ENCODE measurements at regions of chr14 and their contacts with region 1.

Region 1: GRCh38 chr14:61837336-61838229 is 75.4 kb downstream of the SNAPC1 start:
- DNase-seq: peak; percentile 84
- H3K4me3 Mint-ChIP-seq: no peak overlapping the region
- H3K27ac Mint-ChIP-seq: no peak overlapping the region
- H3K4me1 Mint-ChIP-seq: no peaks in the 10 kb centered on the region
- H3K27me3 Mint-ChIP-seq: no peaks in the 10 kb centered on the region
- CTCF ChIP-seq: peak; percentile 73

Region 2: GRCh38 chr14:61296719-61297502 is 540.7 kb before region 1 on chr14:
- CTCF ChIA-PET with region 1: no interaction called
- intact Hi-C with region 1: loop called (anchors 5 kb)
- DNase-seq: peak; percentile 25
- H3K4me3 Mint-ChIP-seq: no peak overlapping the region
- H3K27ac Mint-ChIP-seq: no peak overlapping the region
- H3K4me1 Mint-ChIP-seq: peaks cover 9% of the 10 kb centered on the region
- H3K27me3 Mint-ChIP-seq: no peaks in the 10 kb centered on the region
- CTCF ChIP-seq: peak; percentile 29

Region 3: GRCh38 chr14:61456720-61457119 is 380.9 kb before region 1 on chr14:
- CTCF ChIA-PET with region 1: interaction called, 7 read pairs
- intact Hi-C with region 1: loop called (anchors 1 kb)
- DNase-seq: peak; percentile 85
- H3K4me3 Mint-ChIP-seq: no peak overlapping the region
- H3K27ac Mint-ChIP-seq: no peak overlapping the region
- H3K4me1 Mint-ChIP-seq: peaks cover 6% of the 10 kb centered on the region
- H3K27me3 Mint-ChIP-seq: no peaks in the 10 kb centered on the region
- CTCF ChIP-seq: peak; percentile 71

Region 4: GRCh38 chr14:61461808-61462275 is 375.7 kb before region 1 on chr14:
- CTCF ChIA-PET with region 1: interaction called, 7 read pairs
- intact Hi-C with region 1: loop called (anchors 1 kb)
- DNase-seq: peak; percentile 50
- H3K4me3 Mint-ChIP-seq: no peak overlapping the region
- H3K27ac Mint-ChIP-seq: peak overlapping the region; percentile 78
- H3K4me1 Mint-ChIP-seq: peaks cover 25% of the 10 kb centered on the region
- H3K27me3 Mint-ChIP-seq: no peaks in the 10 kb centered on the region
- CTCF ChIP-seq: peak; percentile 54

Region 5: GRCh38 chr14:61568572-61569131 is 268.9 kb before region 1 on chr14:
- CTCF ChIA-PET with region 1: no interaction called
- intact Hi-C with region 1: loop called (anchors 10 kb)
- DNase-seq: peak; percentile 49
- H3K4me3 Mint-ChIP-seq: peak overlapping the region; percentile 48
- H3K27ac Mint-ChIP-seq: peak overlapping the region; percentile 46
- H3K4me1 Mint-ChIP-seq: peaks cover 77% of the 10 kb centered on the region
- H3K27me3 Mint-ChIP-seq: no peaks in the 10 kb centered on the region
- CTCF ChIP-seq: no peak

Region 6: GRCh38 chr14:61750708-61751474 is 86.7 kb before region 1 on chr14:
- CTCF ChIA-PET with region 1: no interaction called
- intact Hi-C with region 1: loop called (anchors 5 kb)
- DNase-seq: peak; percentile 89
- H3K4me3 Mint-ChIP-seq: peak overlapping the region; percentile 74
- H3K27ac Mint-ChIP-seq: peak overlapping the region; percentile 70
- H3K4me1 Mint-ChIP-seq: peaks cover 40% of the 10 kb centered on the region
- H3K27me3 Mint-ChIP-seq: no peaks in the 10 kb centered on the region
- CTCF ChIP-seq: no peak

Region 7: GRCh38 chr14:62103464-62103863 is 265.9 kb after region 1 on chr14:
- CTCF ChIA-PET with region 1: interaction called, 15 read pairs
- intact Hi-C with region 1: no loop called
- DNase-seq: no peak
- H3K4me3 Mint-ChIP-seq: no peak overlapping the region
- H3K27ac Mint-ChIP-seq: no peak overlapping the region
- H3K4me1 Mint-ChIP-seq: no peaks in the 10 kb centered on the region
- H3K27me3 Mint-ChIP-seq: no peaks in the 10 kb centered on the region
- CTCF ChIP-seq: no peak